CD8-positive, alpha-beta T cell (primary cell): ENCODE measurements at regions of chr2 and their contacts with region 1.

Region 1: DNA sequence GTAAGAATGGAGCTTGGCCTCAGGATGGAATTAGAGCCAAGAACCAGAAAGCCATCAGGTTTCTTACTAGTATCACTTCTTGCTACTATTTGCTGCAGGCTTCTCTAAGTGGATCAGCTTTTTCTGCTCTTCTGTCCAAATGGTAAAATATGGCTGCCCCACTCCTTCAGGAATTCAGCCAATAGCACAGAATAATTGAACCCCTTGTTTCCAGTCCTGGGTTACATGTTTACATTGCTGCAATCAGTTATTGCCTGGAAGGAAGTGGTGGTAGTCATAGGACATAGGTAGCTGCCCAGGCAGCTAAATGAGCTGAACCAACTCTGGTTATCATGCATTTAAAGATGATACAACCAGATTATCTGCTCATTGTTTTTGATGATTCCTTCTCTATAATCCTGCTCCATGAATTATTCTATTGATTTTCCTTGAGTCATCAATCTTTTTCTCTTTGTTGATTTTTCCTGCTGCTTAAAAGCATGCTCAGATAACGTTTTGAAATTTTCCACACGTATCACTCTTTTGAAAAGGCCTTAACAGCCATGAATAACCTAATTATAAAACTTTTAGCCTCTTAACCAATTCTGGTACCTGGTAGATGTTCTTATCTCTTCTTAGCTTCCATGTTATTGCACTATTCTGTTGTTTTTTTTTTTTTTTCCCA is 12.6 kb downstream of the AGPS start:
- DNase-seq: no peak
- ATAC-seq: no peak
- H3K4me3 ChIP-seq: no peak overlapping the region
- H3K4me3 Mint-ChIP-seq: no peak overlapping the region
- H3K27ac ChIP-seq: no peak overlapping the region
- H3K27ac Mint-ChIP-seq: no peak overlapping the region
- H3K4me1 ChIP-seq: peaks cover 6% of the 10 kb centered on the region
- H3K4me1 Mint-ChIP-seq: peaks cover 60% of the 10 kb centered on the region
- H3K27me3 ChIP-seq: no peaks in the 10 kb centered on the region
- H3K27me3 Mint-ChIP-seq: no peaks in the 10 kb centered on the region
- CTCF ChIP-seq: no peak

Region 2: GRCh38 chr2:176729706-176730569 is 675.2 kb before region 1 on chr2:
- CTCF ChIA-PET with region 1: no interaction called
- POLR2A ChIA-PET with region 1: no interaction called
- intact Hi-C with region 1: no loop called
- DNase-seq: no peak
- ATAC-seq: no peak
- H3K4me3 ChIP-seq: no peak overlapping the region
- H3K4me3 Mint-ChIP-seq: no peak overlapping the region
- H3K27ac ChIP-seq: no peak overlapping the region
- H3K27ac Mint-ChIP-seq: no peak overlapping the region
- H3K4me1 ChIP-seq: no peaks in the 10 kb centered on the region
- H3K4me1 Mint-ChIP-seq: no peaks in the 10 kb centered on the region
- H3K27me3 ChIP-seq: no peaks in the 10 kb centered on the region
- H3K27me3 Mint-ChIP-seq: peaks cover 4% of the 10 kb centered on the region
- CTCF ChIP-seq: no peak

Region 3: GRCh38 chr2:177419274-177419673 is 14.1 kb after region 1 on chr2:
- CTCF ChIA-PET with region 1: interaction called, 18 read pairs
- POLR2A ChIA-PET with region 1: no interaction called
- intact Hi-C with region 1: no loop called
- DNase-seq: no peak
- ATAC-seq: no peak
- H3K4me3 ChIP-seq: no peak overlapping the region
- H3K4me3 Mint-ChIP-seq: no peak overlapping the region
- H3K27ac ChIP-seq: no peak overlapping the region
- H3K27ac Mint-ChIP-seq: no peak overlapping the region
- H3K4me1 ChIP-seq: no peaks in the 10 kb centered on the region
- H3K4me1 Mint-ChIP-seq: peaks cover 27% of the 10 kb centered on the region
- H3K27me3 ChIP-seq: no peaks in the 10 kb centered on the region
- H3K27me3 Mint-ChIP-seq: no peaks in the 10 kb centered on the region
- CTCF ChIP-seq: no peak